ENCODE measurements at regions of chr6 and their contacts with region 1.

Region 1: DNA sequence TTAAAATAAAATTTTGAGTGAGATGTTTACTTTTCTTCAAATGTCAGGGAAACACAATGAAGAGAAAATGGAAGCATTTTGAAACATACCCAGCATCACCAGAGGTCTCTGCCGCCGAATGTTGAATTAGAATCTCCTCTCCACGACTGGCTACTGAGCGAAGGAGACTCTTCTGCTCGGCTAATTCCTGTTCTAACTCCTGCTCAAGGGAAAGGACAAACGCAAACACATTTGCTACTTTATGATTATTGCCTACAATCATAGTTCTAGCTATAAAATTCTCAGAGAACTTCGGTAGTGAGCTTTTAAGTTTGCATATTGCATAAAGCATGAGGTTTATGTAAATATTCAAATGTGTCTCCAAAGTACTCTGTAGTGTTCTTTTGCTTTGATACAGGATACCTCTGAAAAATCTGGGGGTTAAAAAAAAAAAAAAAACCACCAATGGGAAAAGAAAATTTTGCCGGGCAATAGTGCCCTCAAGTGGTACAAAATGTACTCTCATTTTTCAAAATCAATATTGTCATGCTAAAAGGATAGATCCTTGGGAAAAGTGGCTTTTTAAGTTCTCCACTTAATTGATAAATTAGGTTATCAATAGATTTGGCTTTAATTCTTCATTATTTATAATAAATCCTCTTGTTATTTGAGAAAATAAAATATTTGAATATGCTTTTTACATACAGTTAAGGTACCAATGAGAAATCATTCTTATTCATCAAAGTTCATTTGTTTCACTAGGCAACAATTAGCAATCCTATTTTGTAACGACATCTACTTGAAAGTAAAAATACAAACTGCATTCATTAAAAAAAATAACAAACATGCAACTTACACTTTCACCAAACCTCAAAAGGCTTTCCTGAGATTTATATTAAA is 369.0 kb downstream of the SYNE1 start:
- DNase-seq: no peak
- H3K4me3 ChIP-seq: no peak overlapping the region
- H3K27ac ChIP-seq: no peak overlapping the region
- H3K4me1 ChIP-seq: peaks cover 32% of the 10 kb centered on the region
- H3K27me3 ChIP-seq: no peaks in the 10 kb centered on the region
- CTCF ChIP-seq: peak; percentile 26 to 54

Region 2: DNA sequence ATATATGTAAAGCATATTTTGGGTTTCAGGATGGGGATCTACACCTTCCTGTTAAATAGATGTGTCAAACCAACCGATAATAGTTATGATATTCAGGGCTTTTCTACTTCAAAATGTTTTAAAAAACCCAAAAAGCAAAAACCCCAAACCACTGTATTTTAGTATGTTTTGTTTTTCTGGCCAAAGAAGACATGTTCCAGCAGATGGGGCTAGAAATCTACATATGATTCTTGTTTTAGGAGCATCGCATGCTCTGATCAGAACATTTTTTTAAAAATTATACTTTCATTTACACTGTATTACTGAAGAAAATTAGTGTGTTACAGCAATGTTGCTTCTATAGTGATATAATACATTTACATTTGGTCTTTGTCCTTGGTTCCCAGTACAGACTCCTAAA is 827.3 kb before region 1 on chr6:
- CTCF ChIA-PET with region 1: no interaction called
- dilution Hi-C with region 1: no loop called
- in situ Hi-C with region 1: loop called in 1 of 2 experiments (anchors 25 kb)
- intact Hi-C with region 1: no loop called
- DNase-seq: no peak
- H3K4me3 ChIP-seq: no peak overlapping the region
- H3K27ac ChIP-seq: no peak overlapping the region
- H3K4me1 ChIP-seq: peaks cover 21% of the 10 kb centered on the region
- H3K27me3 ChIP-seq: no peaks in the 10 kb centered on the region
- CTCF ChIP-seq: peak in 1 of 2 donors; percentile 36

Region 3: DNA sequence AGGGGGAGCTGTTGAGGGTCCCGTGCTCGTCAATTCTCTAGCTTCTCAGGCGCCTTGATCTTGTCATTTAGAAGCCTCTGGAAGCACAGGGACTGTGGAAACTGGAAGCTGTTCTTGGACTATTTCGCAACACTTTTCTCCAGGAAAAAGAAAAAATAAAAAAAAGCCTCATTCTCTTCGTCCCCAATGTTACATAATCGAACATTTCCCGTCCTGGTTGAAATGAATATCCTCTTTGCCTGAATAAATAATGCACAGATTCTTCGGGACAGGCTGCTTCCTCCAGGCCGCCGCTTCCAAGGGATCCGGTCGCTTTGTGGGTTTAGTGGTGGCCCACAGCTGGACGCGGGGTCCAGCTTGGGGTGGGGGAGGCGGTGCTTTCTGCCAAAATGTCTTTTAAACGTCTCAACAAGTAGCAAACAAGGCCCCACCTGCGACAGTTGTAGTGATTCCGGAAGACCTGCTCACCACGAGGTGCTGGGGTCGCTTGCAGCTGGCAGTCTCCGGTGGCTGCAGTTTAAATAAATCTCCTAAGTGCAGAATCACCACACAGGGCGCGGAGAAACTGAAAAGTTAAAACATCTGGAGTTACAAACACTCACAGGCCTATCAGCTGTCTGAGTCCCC is 586.7 kb before region 1 on chr6:
- CTCF ChIA-PET with region 1: no interaction called
- dilution Hi-C with region 1: no loop called
- in situ Hi-C with region 1: loop called (anchors 10 to 25 kb)
- intact Hi-C with region 1: no loop called
- DNase-seq: no peak
- H3K4me3 ChIP-seq: no peak overlapping the region
- H3K27ac ChIP-seq: no peak overlapping the region
- H3K4me1 ChIP-seq: no peaks in the 10 kb centered on the region
- H3K27me3 ChIP-seq: no peaks in the 10 kb centered on the region
- CTCF ChIP-seq: no peak

Region 4: GRCh38 chr6:151765444-151765886 is 502.7 kb before region 1 on chr6:
- CTCF ChIA-PET with region 1: interaction called, 8 read pairs
- dilution Hi-C with region 1: no loop called
- in situ Hi-C with region 1: loop called in 1 of 2 experiments (anchors 10 kb)
- intact Hi-C with region 1: loop called (anchors 2 kb)
- DNase-seq: peak; percentile 83
- H3K4me3 ChIP-seq: peak overlapping the region in 1 of 3 experiments; percentile 17
- H3K27ac ChIP-seq: no peak overlapping the region
- H3K4me1 ChIP-seq: peaks cover 18% of the 10 kb centered on the region
- H3K27me3 ChIP-seq: no peaks in the 10 kb centered on the region
- CTCF ChIP-seq: peak; percentile 70 to 74

Region 5: GRCh38 chr6:152018876-152019275 is 249.3 kb before region 1 on chr6:
- CTCF ChIA-PET with region 1: interaction called, 15 read pairs
- dilution Hi-C with region 1: no loop called
- in situ Hi-C with region 1: no loop called
- intact Hi-C with region 1: no loop called
- DNase-seq: no peak
- H3K4me3 ChIP-seq: no peak overlapping the region
- H3K27ac ChIP-seq: no peak overlapping the region
- H3K4me1 ChIP-seq: no peaks in the 10 kb centered on the region
- H3K27me3 ChIP-seq: no peaks in the 10 kb centered on the region
- CTCF ChIP-seq: no peak

Region 6: GRCh38 chr6:152201120-152201519 is 67.1 kb before region 1 on chr6:
- CTCF ChIA-PET with region 1: no interaction called
- dilution Hi-C with region 1: no loop called
- in situ Hi-C with region 1: no loop called
- intact Hi-C with region 1: no loop called
- DNase-seq: no peak
- H3K4me3 ChIP-seq: no peak overlapping the region
- H3K27ac ChIP-seq: no peak overlapping the region
- H3K4me1 ChIP-seq: no peaks in the 10 kb centered on the region
- H3K27me3 ChIP-seq: no peaks in the 10 kb centered on the region
- CTCF ChIP-seq: no peak

Measured in mammary epithelial cell (primary cell).